Mammary epithelial cell (primary cell): ENCODE measurements at regions of chr15 and their contacts with region 1.

Region 1: GRCh38 chr15:92942706-92943105 is 42.6 kb downstream of the CHD2 start:
- DNase-seq: no peak
- H3K4me3 ChIP-seq: no peak overlapping the region
- H3K27ac ChIP-seq: no peak overlapping the region
- H3K4me1 ChIP-seq: no peaks in the 10 kb centered on the region
- H3K27me3 ChIP-seq: no peaks in the 10 kb centered on the region
- CTCF ChIP-seq: no peak

Region 2: GRCh38 chr15:92981333-92981732 is 38.6 kb after region 1 on chr15:
- CTCF ChIA-PET with region 1: no interaction called
- dilution Hi-C with region 1: no loop called
- in situ Hi-C with region 1: no loop called
- intact Hi-C with region 1: loop called (anchors 5 kb)
- DNase-seq: peak; percentile 96
- H3K4me3 ChIP-seq: peak overlapping the region in 2 of 3 experiments; percentile 8 to 9
- H3K27ac ChIP-seq: peak overlapping the region; percentile 97
- H3K4me1 ChIP-seq: peaks cover 42% of the 10 kb centered on the region
- H3K27me3 ChIP-seq: no peaks in the 10 kb centered on the region
- CTCF ChIP-seq: no peak

Region 3: DNA sequence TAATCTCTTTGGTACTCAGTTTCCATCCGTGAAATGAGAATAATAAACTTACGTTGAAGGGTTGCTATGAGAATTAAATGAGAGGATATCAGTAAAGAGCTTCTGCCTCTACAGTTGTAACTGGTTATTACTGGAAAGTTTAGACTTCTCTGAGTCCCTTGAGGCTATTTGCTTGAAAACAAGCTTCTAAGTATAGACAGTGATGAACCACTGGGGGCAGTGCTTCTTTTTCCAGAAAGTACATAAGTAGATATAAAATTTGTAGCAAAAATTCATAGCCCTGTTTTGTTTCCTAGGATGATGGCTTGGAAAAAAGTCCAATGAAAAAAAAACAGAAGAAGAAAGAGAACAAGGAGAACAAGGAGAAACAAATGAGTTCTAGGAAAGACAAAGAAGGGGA is 59.2 kb after region 1 on chr15:
- CTCF ChIA-PET with region 1: no interaction called
- dilution Hi-C with region 1: no loop called
- in situ Hi-C with region 1: loop called in 1 of 2 experiments (anchors 10 kb)
- intact Hi-C with region 1: loop called (anchors 5 kb)
- DNase-seq: no peak
- H3K4me3 ChIP-seq: no peak overlapping the region
- H3K27ac ChIP-seq: no peak overlapping the region
- H3K4me1 ChIP-seq: no peaks in the 10 kb centered on the region
- H3K27me3 ChIP-seq: no peaks in the 10 kb centered on the region
- CTCF ChIP-seq: peak; percentile 13 to 29

Region 4: DNA sequence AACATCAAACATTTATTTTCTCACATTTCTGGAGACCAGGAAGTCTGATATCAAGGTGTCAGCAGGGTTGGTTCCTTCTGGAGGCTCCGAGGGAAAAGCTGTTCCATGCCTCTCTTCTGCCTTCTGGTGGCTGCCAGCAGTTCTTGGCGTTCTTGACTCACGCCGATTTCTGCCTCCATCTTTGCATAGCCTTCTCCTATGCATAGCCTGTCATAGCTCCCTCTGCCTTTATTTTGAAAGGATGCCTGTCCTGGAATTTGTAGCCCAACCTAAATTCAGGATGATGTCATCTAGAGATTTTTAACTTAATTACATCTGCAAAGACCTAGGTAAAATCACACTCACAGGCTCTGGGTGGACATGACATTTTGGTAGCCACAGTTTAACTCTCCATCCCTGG is 75.9 kb after region 1 on chr15:
- CTCF ChIA-PET with region 1: no interaction called
- dilution Hi-C with region 1: no loop called
- in situ Hi-C with region 1: no loop called
- intact Hi-C with region 1: loop called (anchors 5 kb)
- DNase-seq: peak; percentile 7
- H3K4me3 ChIP-seq: no peak overlapping the region
- H3K27ac ChIP-seq: no peak overlapping the region
- H3K4me1 ChIP-seq: no peaks in the 10 kb centered on the region
- H3K27me3 ChIP-seq: no peaks in the 10 kb centered on the region
- CTCF ChIP-seq: peak; percentile 6 to 35

Region 5: DNA sequence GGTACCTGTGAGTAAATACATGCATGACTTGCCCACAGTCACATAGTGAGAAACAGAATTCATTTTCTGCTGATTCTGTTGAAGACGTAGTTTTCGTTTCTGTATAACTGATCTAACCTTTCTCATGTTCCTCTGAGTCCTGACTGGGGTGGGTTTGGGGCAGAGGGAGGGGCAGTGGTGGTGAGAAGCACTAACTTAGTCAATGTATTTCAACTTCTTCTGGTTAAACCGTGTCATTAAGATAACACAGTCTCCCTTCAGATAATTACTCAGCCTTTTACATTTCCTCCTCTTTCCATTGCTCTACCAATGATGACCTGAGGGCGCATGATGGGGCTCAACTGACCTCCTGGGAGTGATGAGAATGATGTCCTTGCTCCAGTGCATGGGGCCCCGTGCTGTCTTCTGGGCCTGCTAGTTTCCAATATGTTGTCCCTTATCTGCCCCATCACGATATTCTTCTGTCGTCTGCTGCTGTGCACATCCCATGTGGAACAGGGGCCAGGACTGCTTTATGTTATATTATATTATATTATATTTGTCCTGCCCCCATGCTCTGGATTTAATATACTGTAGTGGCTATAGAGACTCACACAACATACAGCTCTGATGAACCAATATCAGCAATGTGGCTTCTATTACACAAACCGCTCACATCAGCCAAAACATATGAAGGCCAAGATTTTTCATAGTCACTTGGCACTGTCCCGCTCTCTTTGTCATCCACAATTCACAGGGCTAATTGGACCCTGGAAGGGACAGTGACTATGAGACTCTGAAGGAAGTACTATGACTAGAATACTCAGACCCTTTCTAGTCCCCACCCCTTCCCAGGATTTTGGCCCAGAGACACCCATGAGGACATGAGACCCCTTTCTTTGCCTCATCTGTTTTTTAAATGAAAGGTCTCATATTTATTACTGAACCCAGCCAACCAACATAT is 881.5 kb after region 1 on chr15:
- CTCF ChIA-PET with region 1: no interaction called
- dilution Hi-C with region 1: no loop called
- in situ Hi-C with region 1: no loop called
- intact Hi-C with region 1: no loop called
- DNase-seq: no peak
- H3K4me3 ChIP-seq: no peak overlapping the region
- H3K27ac ChIP-seq: no peak overlapping the region
- H3K4me1 ChIP-seq: peaks cover 12% of the 10 kb centered on the region
- H3K27me3 ChIP-seq: no peaks in the 10 kb centered on the region
- CTCF ChIP-seq: no peak